K562 (cell line): ENCODE measurements at regions of chr3 and their contacts with region 1.

Region 1: GRCh38 chr3:186930641-186931531 is 560 bp downstream of the ST6GAL1 start:
- DNase-seq: peak; percentile 69 to 86 (median 72)
- ATAC-seq: peak; percentile 86
- H3K4me3 ChIP-seq: peak overlapping the region; percentile 94
- H3K27ac ChIP-seq: peak overlapping the region; percentile 88
- H3K4me1 ChIP-seq: peaks cover 28 to 30% of the 10 kb centered on the region in 2 experiments
- H3K27me3 ChIP-seq: no peaks in the 10 kb centered on the region
- CTCF ChIP-seq: peak; percentile 30 to 80 (median 54); a peak in 5 of 6 replicates
- EP300 ChIP-seq: no peak
- POLR2A ChIP-seq: peak; percentile 63
- RAD21 ChIP-seq: peak; percentile 33 to 55

Region 2: GRCh38 chr3:186882881-186883685 is 47.8 kb before region 1 on chr3:
- CTCF ChIA-PET with region 1: no interaction called
- POLR2A ChIA-PET with region 1: interaction called, 3 read pairs
- in situ Hi-C with region 1: no loop called
- intact Hi-C with region 1: loop called (anchors 5 kb)
- DNase-seq: peak; percentile 46 to 82 (median 54)
- ATAC-seq: peak; percentile 70
- H3K4me3 ChIP-seq: no peak overlapping the region
- H3K27ac ChIP-seq: peak overlapping the region; percentile 64; the same call in 2 of the 3 replicates
- H3K4me1 ChIP-seq: peaks cover 11 to 55% of the 10 kb centered on the region in 2 experiments
- H3K27me3 ChIP-seq: no peaks in the 10 kb centered on the region
- CTCF ChIP-seq: no peak
- EP300 ChIP-seq: peak; percentile 94
- POLR2A ChIP-seq: no peak
- RAD21 ChIP-seq: no peak

Region 3: GRCh38 chr3:186920301-186920700 is 10.6 kb before region 1 on chr3:
- CTCF ChIA-PET with region 1: no interaction called
- POLR2A ChIA-PET with region 1: interaction called, 14 read pairs
- in situ Hi-C with region 1: no loop called
- intact Hi-C with region 1: no loop called
- DNase-seq: no peak
- ATAC-seq: no peak
- H3K4me3 ChIP-seq: no peak overlapping the region
- H3K27ac ChIP-seq: no peak overlapping the region
- H3K4me1 ChIP-seq: peaks cover 14 to 34% of the 10 kb centered on the region in 2 experiments; a peak in 4 of 5 replicates
- H3K27me3 ChIP-seq: no peaks in the 10 kb centered on the region
- CTCF ChIP-seq: no peak
- EP300 ChIP-seq: no peak
- POLR2A ChIP-seq: no peak
- RAD21 ChIP-seq: no peak

Region 4: GRCh38 chr3:187000711-187001151 is 69.8 kb after region 1 on chr3:
- CTCF ChIA-PET with region 1: no interaction called
- POLR2A ChIA-PET with region 1: no interaction called
- in situ Hi-C with region 1: no loop called
- intact Hi-C with region 1: no loop called
- DNase-seq: no peak
- ATAC-seq: no peak
- H3K4me3 ChIP-seq: no peak overlapping the region
- H3K27ac ChIP-seq: no peak overlapping the region; the same call in 2 of the 3 replicates
- H3K4me1 ChIP-seq: peaks cover 27 to 39% of the 10 kb centered on the region in 2 experiments
- H3K27me3 ChIP-seq: no peaks in the 10 kb centered on the region
- CTCF ChIP-seq: no peak
- EP300 ChIP-seq: no peak
- POLR2A ChIP-seq: no peak
- RAD21 ChIP-seq: no peak

Region 5: DNA sequence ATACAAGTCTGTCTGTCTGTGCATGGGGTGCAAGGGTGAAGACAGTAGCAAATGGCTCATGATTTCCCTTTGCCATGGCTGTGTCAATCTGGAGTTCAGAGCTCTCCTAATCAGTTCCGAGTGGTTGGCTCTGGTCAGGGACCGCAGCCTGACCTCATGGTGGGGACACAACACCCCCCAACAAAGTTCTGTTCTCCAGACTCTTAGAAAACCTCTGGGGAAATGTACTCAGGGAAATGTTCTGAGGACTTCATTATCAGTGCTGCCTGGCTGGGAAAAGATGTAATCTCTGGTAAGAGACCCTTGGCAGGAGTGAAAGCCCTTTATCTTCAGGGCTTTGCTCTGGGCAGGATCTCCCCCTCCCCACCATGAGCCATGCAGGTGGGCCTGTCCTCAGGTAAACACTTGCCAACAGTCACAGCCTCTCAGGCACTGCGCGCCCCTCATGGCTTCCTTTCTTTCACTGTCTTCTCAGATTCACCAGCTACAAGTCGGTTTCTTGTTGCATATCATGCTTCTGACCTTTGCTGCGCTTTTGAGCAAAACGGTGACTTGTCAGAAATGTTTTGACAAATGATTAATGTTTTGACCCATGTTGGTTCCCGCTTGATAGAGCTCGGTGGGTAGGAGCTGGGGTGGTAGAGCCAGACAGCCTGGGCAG is 94.9 kb after region 1 on chr3:
- CTCF ChIA-PET with region 1: no interaction called
- POLR2A ChIA-PET with region 1: no interaction called
- in situ Hi-C with region 1: no loop called
- intact Hi-C with region 1: loop called (anchors 2 kb)
- DNase-seq: peak in 2 of 4 experiments; percentile 37 to 57
- ATAC-seq: peak; percentile 33
- H3K4me3 ChIP-seq: no peak overlapping the region
- H3K27ac ChIP-seq: peak overlapping the region; percentile 58; the same call in 1 of the 3 replicates
- H3K4me1 ChIP-seq: peaks cover 33 to 57% of the 10 kb centered on the region in 2 experiments
- H3K27me3 ChIP-seq: no peaks in the 10 kb centered on the region
- CTCF ChIP-seq: no peak
- EP300 ChIP-seq: no peak
- POLR2A ChIP-seq: no peak
- RAD21 ChIP-seq: no peak